H1 (cell line): ENCODE measurements at regions of chr1 and their contacts with region 1.

Region 1: GRCh38 chr1:21659099-21659923 is 9.8 kb downstream of the RAP1GAP start:
- DNase-seq: peak; percentile 62 to 99
- H3K4me3 ChIP-seq: peak overlapping the region; percentile 34 to 69 (median 56)
- H3K27ac ChIP-seq: no peak overlapping the region
- H3K4me1 ChIP-seq: peaks cover 0 to 2% (median under 1%) of the 10 kb centered on the region in 4 experiments; a peak in 4 of 7 replicates
- H3K27me3 ChIP-seq: peaks cover 0 to 13% (median 10%) of the 10 kb centered on the region in 4 experiments; a peak in 5 of 7 replicates
- CTCF ChIP-seq: peak; percentile 75 to 92 (median 83)
- EP300 ChIP-seq: peak in 1 of 2 experiments; percentile 44; a peak in 1 of 3 replicates
- POLR2A ChIP-seq: no peak
- RAD21 ChIP-seq: peak; percentile 76 to 82

Region 2: GRCh38 chr1:21594935-21595897 is 64.1 kb before region 1 on chr1:
- CTCF ChIA-PET with region 1: interaction called, 12 read pairs
- POLR2A ChIA-PET with region 1: no interaction called
- DNase-seq: peak in 1 of 2 experiments; percentile 93
- H3K4me3 ChIP-seq: no peak overlapping the region
- H3K27ac ChIP-seq: no peak overlapping the region
- H3K4me1 ChIP-seq: peaks cover 5 to 14% (median 10%) of the 10 kb centered on the region in 4 experiments; a peak in 6 of 7 replicates
- H3K27me3 ChIP-seq: 0 out of 7 replicates have a peak, but pooled peaks cover 0 to 2% (median 0%) of the 10 kb centered on the region in 4 experiments
- CTCF ChIP-seq: peak in 2 of 3 experiments; percentile 90 to 94; a peak in 3 of 4 replicates
- EP300 ChIP-seq: no peak
- POLR2A ChIP-seq: no peak
- RAD21 ChIP-seq: peak; percentile 94 to 97

Region 3: GRCh38 chr1:21607549-21608529 is 51.5 kb before region 1 on chr1:
- CTCF ChIA-PET with region 1: interaction called, 13 read pairs
- POLR2A ChIA-PET with region 1: interaction called, 3 read pairs
- DNase-seq: peak; percentile 100
- H3K4me3 ChIP-seq: peak overlapping the region in 1 of 4 experiments; percentile 40; a peak in 2 of 8 replicates
- H3K27ac ChIP-seq: no peak overlapping the region
- H3K4me1 ChIP-seq: peaks cover 2 to 7% (median 3%) of the 10 kb centered on the region in 4 experiments; a peak in 6 of 7 replicates
- H3K27me3 ChIP-seq: no peaks in the 10 kb centered on the region
- CTCF ChIP-seq: no peak
- EP300 ChIP-seq: no peak
- POLR2A ChIP-seq: no peak
- RAD21 ChIP-seq: no peak

Region 4: DNA sequence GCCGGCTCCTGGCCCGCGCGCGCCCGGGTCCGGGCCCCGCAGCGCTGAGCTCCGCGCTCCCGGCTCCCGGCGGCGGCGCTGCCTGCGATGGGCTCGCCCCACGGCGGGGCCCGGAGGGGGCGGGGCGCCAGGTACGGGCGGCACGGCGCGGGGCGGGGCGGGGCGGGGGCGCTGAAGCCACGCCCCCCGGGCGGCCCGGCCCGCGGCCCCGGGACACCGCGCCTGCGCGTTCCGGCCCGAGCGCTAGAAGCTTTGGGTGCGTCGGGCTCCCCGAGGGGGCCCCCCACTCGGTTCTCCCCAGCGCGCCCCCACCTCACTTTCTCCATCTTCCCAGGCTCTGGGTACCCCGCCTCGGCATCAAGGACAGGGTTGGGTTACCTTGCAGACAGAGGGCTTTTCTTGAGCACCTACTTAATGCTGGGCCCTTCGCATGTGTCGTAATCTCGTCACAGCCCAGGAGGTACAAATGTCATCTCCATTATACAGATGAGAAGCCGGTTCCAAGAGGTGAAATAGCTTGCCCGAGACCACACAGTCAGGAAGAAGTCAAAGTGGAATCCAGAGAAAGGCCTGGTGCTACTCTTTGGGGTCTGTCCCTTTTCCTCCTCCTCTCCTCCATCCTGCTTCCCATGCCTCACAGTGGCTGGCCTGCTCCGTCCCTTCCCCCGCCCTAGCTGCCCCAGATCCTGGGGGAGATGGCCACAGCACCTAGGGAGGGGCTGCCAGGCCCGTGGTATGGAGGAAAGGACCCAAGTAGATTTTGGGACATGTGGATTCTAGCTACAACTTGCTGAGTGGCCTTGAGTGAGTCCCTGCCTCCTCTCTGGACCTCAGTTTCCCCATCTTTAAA is 36.6 kb before region 1 on chr1:
- CTCF ChIA-PET with region 1: interaction called, 11 read pairs
- POLR2A ChIA-PET with region 1: no interaction called
- DNase-seq: peak in 1 of 2 experiments; percentile 81
- H3K4me3 ChIP-seq: peak overlapping the region; percentile 24 to 60 (median 32)
- H3K27ac ChIP-seq: no peak overlapping the region
- H3K4me1 ChIP-seq: peaks cover 0 to 23% (median 17%) of the 10 kb centered on the region in 4 experiments; a peak in 6 of 7 replicates
- H3K27me3 ChIP-seq: peaks cover 0 to 26% (median 13%) of the 10 kb centered on the region in 4 experiments; a peak in 5 of 7 replicates
- CTCF ChIP-seq: no peak
- EP300 ChIP-seq: no peak
- POLR2A ChIP-seq: no peak
- RAD21 ChIP-seq: no peak

Region 5: GRCh38 chr1:21638531-21639356 is 20.6 kb before region 1 on chr1:
- CTCF ChIA-PET with region 1: interaction called, 10 read pairs
- POLR2A ChIA-PET with region 1: no interaction called
- DNase-seq: no peak
- H3K4me3 ChIP-seq: no peak overlapping the region
- H3K27ac ChIP-seq: no peak overlapping the region
- H3K4me1 ChIP-seq: peaks cover 0 to 15% (median 1%) of the 10 kb centered on the region in 4 experiments; a peak in 5 of 7 replicates
- H3K27me3 ChIP-seq: no peaks in the 10 kb centered on the region
- CTCF ChIP-seq: no peak
- EP300 ChIP-seq: no peak
- POLR2A ChIP-seq: no peak
- RAD21 ChIP-seq: no peak

Region 6: DNA sequence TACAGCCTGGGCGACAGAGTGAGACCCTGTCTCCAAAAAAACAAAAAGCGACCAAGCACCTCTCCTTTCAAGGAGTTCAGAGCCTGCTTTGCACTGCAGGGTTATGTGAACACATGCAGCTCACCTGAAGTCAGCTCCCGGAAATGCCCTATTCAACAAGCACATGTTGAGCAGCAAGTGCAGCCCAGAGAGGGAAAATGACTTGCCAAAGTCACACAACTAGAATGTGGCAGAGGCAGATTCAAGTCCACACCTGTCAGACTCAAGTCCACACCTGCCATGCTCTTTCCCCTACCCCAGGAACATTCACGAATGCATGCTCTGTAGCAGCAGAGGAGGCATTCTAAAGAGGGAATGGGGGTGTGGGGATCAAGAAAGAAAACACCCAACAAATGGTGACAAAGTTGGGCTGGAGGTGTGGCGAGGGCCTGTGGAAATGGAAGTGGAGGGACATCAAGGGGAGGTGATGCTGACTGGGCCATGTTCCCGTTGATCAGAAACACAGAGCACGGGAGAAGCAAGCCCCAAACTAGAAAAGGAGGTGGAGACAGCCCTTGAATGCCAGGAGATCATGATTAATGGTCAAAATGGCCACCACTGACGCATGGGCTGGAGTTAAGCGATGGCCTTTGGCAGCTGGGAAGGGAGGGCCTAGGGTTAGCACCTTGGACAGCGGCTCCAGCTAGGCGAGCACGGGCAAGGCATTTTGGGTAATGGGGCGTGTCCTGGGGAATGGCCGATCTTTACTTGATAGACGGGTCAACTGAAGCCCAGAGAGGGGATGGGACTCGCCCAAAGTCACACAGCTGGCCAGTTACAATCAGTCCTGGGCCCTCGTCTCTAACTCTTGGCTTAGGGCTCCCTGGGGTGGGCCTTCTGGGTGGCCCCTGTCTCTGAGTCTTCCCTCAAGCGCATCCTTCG is 11.6 kb before region 1 on chr1:
- CTCF ChIA-PET with region 1: interaction called, 11 read pairs
- POLR2A ChIA-PET with region 1: interaction called, 5 read pairs
- DNase-seq: peak; percentile 67 to 95
- H3K4me3 ChIP-seq: no peak overlapping the region
- H3K27ac ChIP-seq: no peak overlapping the region
- H3K4me1 ChIP-seq: peaks cover 0 to 14% (median 9%) of the 10 kb centered on the region in 4 experiments; a peak in 6 of 7 replicates
- H3K27me3 ChIP-seq: peaks cover 0 to 16% (median 8%) of the 10 kb centered on the region in 4 experiments; a peak in 3 of 7 replicates
- CTCF ChIP-seq: no peak
- EP300 ChIP-seq: no peak
- POLR2A ChIP-seq: no peak
- RAD21 ChIP-seq: peak in 1 of 2 experiments; percentile 6; a peak in 1 of 4 replicates

Region 7: GRCh38 chr1:21669258-21670058 is 10.1 kb after region 1 on chr1 and contains the start of gene RAP1GAP:
- CTCF ChIA-PET with region 1: interaction called, 25 read pairs
- POLR2A ChIA-PET with region 1: interaction called, 19 read pairs
- DNase-seq: no peak
- H3K4me3 ChIP-seq: peak within 1 kb of the TSS; percentile 62 to 76 (median 68)
- H3K27ac ChIP-seq: no peak within 1 kb of the TSS
- H3K4me1 ChIP-seq: peaks cover 0 to 26% (median 9%) of the 10 kb centered on the region in 4 experiments; a peak in 6 of 7 replicates
- H3K27me3 ChIP-seq: peaks cover 0 to 28% (median 19%) of the 10 kb centered on the region in 4 experiments; a peak in 5 of 7 replicates
- CTCF ChIP-seq: peak in 1 of 3 experiments; percentile 15; a peak in 1 of 4 replicates
- EP300 ChIP-seq: no peak
- POLR2A ChIP-seq: no peak; a peak in 1 of 3 replicates
- RAD21 ChIP-seq: no peak
- total RNA-seq, gene RAP1GAP: 7.8 and 8.4 TPM in 2 replicates